ENCODE measurements at regions of chr7 and their contacts with region 1.

Region 1: DNA sequence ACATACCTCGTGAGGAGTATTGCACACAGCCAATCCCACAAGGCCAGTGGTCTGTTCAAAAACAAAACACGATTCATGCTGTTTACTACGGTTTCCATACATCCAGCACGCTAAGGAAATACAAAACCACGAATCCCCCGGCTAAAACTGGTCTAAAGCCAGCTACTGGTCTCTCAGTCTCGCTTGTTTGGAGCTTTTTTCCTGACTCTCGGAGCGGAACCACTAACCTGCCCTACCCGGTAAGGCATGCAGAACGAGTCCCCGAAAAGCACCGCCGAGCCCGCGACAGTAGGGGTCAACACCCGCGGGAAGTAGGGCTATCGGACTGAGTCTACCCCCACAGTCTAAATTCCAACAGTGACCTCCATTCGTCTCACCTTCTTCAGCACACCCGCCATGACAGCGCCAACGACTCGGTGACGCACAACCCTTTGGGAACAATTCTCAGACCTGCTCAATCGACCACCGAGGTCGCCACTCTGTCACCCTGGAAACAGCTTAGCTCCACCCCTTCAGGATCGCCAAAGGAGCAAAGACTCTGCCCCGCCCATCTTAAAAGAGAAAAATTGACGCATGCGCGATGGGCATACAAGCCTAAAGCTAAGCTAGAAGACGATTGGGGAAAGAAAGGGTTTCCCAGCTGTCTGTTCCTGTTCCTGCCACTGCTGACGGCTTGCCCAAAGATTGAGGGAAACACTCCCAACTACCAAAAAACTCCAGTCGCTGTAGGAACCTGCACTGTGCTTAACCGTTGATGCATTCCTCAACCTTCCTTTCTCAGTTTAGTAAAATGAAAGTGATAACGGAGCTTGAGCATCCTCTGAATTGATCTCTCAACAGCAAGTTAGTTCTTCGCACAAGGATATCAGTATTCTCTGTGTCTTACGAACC is at the start of gene NDUFA5:
- DNase-seq: peak; percentile 97 to 100 (median 99)
- H3K4me3 ChIP-seq: peak within 1 kb of the TSS; percentile 78 to 100 (median 98)
- H3K4me3 Mint-ChIP-seq: no peak within 1 kb of the TSS
- H3K27ac ChIP-seq: peak within 1 kb of the TSS; percentile 68 to 95
- H3K27ac Mint-ChIP-seq: peak within 1 kb of the TSS in 1 of 7 donors; percentile 12
- H3K4me1 ChIP-seq: peaks cover 15 to 20% of the 10 kb centered on the region in 2 donors
- H3K4me1 Mint-ChIP-seq: peaks cover 3% of the 10 kb centered on the region
- H3K27me3 ChIP-seq: peaks cover 2 to 8% of the 10 kb centered on the region in 2 donors
- H3K27me3 Mint-ChIP-seq: peaks cover 4 to 8% (median 6%) of the 10 kb centered on the region in 3 donors
- CTCF ChIP-seq: no peak
- polyA plus RNA-seq, gene NDUFA5: 6.9 to 49.2 (median 37.3) TPM

Region 2: DNA sequence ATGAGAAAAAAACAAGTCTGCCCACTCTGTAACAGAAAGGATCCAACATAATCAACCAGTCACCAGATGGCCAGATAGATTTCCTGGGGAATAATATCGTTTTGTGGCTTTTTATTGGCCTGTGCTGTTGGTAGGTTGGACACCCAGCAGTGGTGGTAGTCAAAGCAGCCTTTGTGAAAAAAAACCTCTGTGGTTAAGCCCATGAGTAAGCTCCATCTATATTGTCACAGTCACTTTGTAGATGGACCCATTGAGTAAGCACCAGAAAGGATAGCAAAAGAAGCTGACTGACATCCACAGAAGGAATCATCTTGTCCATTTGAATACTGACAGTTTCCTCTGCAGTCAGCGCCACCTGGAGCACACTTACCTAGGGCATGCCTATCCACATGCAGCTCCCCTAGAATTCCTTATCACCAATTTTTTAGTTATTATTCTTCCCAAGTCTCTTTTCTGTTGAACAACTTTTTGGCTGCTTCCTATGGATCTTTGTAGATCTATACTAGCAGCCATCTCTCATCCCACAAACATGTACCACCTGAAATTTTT is 120.1 kb before region 1 on chr7:
- intact Hi-C with region 1: no loop called
- DNase-seq: no peak
- H3K4me3 ChIP-seq: no peak overlapping the region
- H3K4me3 Mint-ChIP-seq: no peak overlapping the region
- H3K27ac ChIP-seq: no peak overlapping the region
- H3K27ac Mint-ChIP-seq: no peak overlapping the region
- H3K4me1 ChIP-seq: no peaks in the 10 kb centered on the region
- H3K4me1 Mint-ChIP-seq: no peaks in the 10 kb centered on the region
- H3K27me3 ChIP-seq: no peaks in the 10 kb centered on the region
- H3K27me3 Mint-ChIP-seq: peaks cover 0 to 3% (median 0%) of the 10 kb centered on the region in 3 donors
- CTCF ChIP-seq: no peak

Region 3: DNA sequence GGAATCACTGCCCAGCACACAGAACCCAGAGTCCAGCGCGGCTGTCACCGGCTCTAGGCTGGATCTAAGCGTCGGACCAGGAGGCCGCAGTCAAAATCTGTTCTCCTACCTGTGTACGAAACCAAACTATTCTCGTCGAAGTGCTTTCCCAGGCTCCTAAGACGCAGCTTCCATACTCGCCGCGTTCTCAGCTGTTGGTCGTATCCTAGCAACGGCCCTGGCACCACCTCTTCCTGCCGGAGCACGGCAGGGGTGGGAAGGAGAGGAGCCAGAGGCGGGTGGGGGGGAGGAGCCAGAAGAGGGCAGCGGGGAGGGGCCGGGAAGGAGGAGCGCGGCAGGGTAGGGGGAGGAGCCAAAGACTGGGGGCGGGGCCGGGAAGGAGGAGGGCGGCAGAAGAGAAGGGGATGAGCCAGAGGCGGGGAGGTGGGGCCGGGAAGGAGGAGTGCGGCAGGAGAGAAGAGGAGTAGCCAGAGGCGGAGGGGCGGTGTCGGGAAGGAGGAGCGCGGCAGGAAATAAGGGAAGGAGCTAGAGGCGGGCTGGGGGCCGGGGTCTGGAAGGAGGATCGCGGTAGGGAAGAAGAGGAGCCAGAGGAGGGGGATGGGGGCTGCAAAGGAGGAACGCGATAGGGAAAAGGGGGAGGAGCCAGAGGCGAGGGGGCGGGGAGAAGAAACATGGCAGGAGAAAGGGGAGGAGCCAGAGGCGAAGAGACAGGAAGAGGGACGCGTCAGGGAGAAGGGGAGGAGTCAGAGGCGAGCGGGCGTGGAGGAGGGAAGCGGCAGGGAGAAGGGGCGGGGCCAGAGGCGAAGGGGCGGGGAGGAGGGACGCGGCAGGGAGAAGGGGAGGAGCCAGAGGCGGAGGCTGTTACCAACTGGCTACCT is 23.0 kb before region 1 on chr7 and contains the start of gene IQUB:
- intact Hi-C with region 1: loop called (anchors 1 to 2 kb)
- DNase-seq: peak; percentile 95 to 98 (median 97)
- H3K4me3 ChIP-seq: peak within 1 kb of the TSS; percentile 73 to 90 (median 77)
- H3K4me3 Mint-ChIP-seq: peak within 1 kb of the TSS; percentile 91 to 97
- H3K27ac ChIP-seq: peak within 1 kb of the TSS; percentile 73 to 77
- H3K27ac Mint-ChIP-seq: peak within 1 kb of the TSS; percentile 88 to 99 (median 96)
- H3K4me1 ChIP-seq: peaks cover 10 to 18% of the 10 kb centered on the region in 2 donors
- H3K4me1 Mint-ChIP-seq: peaks cover 20% of the 10 kb centered on the region
- H3K27me3 ChIP-seq: peaks cover 19 to 34% of the 10 kb centered on the region in 2 donors
- H3K27me3 Mint-ChIP-seq: peaks cover 36 to 42% (median 37%) of the 10 kb centered on the region in 3 donors
- CTCF ChIP-seq: no peak
- polyA plus RNA-seq, gene IQUB: 0.07 TPM in 1 of 3 donors, not detected in the others

Region 4: GRCh38 chr7:123748734-123749536 is 191.3 kb after region 1 on chr7 and contains the start of gene WASL:
- intact Hi-C with region 1: loop called in 1 of 2 experiments (anchors 10 kb)
- DNase-seq: peak; percentile 85 to 92 (median 91)
- H3K4me3 ChIP-seq: peak within 1 kb of the TSS; percentile 71 to 99 (median 94)
- H3K4me3 Mint-ChIP-seq: peak within 1 kb of the TSS; percentile 97 to 99
- H3K27ac ChIP-seq: peak within 1 kb of the TSS; percentile 97 to 100
- H3K27ac Mint-ChIP-seq: peak within 1 kb of the TSS; percentile 96 to 99 (median 98)
- H3K4me1 ChIP-seq: peaks cover 20 to 48% of the 10 kb centered on the region in 2 donors
- H3K4me1 Mint-ChIP-seq: peaks cover 44% of the 10 kb centered on the region
- H3K27me3 ChIP-seq: no peaks in the 10 kb centered on the region
- H3K27me3 Mint-ChIP-seq: peaks cover 0 to 2% (median 0%) of the 10 kb centered on the region in 3 donors
- CTCF ChIP-seq: no peak
- polyA plus RNA-seq, gene WASL: 1.6 to 3.9 (median 2.1) TPM

Region 5: DNA sequence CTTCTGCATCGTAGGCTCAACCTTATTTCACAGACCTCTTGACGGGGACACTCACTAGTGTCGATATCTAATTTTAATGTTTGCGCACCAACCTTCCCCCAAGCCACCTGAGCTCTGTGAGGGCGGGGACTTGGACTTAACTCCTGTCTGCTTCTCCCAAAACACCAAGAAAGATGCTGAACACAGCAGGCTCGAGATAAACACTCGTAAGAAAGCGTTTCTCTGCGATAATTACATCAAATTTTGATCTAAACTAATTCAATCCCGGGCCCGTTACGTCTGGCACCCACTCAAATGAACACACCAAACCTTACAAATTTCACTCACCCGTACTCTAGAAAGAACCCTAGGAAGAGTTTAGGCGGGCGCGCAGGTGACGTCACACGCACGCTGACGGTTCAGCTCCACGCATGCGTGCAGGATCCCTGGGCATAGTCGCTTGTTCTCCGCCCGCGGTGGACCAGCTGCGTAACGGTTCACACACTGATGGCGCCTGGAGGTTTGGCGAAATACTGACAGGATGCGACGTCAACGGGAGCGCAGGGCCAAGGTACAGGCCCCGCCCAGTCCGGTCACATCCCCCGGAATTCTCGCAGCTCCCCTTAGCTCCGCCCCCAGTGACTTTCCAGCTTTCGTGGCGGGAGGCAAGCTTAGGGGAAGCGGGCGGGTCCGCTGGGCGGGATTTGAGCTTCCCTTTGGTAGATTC is 1372.0 kb after region 1 on chr7 and contains the start of gene POT1:
- intact Hi-C with region 1: loop called in 1 of 2 experiments (anchors 10 kb)
- DNase-seq: peak; percentile 99 to 100 (median 100)
- H3K4me3 ChIP-seq: peak within 1 kb of the TSS; percentile 57 to 96 (median 84)
- H3K4me3 Mint-ChIP-seq: peak within 1 kb of the TSS; percentile 93 to 98
- H3K27ac ChIP-seq: peak within 1 kb of the TSS; percentile 77 to 92
- H3K27ac Mint-ChIP-seq: peak within 1 kb of the TSS; percentile 97 to 100 (median 99)
- H3K4me1 ChIP-seq: peaks cover 6 to 7% of the 10 kb centered on the region in 2 donors
- H3K4me1 Mint-ChIP-seq: peaks cover 16% of the 10 kb centered on the region
- H3K27me3 ChIP-seq: no peaks in the 10 kb centered on the region
- H3K27me3 Mint-ChIP-seq: peaks cover 4 to 11% (median 9%) of the 10 kb centered on the region in 3 donors
- CTCF ChIP-seq: no peak
- polyA plus RNA-seq, gene POT1: 6.7 to 12.2 (median 10.4) TPM